Mammary epithelial cell (primary cell): ENCODE measurements at regions of chr19 and their contacts with region 1.

Region 1: GRCh38 chr19:6460101-6460853 is 685 bp upstream of the SLC25A23 start:
- DNase-seq: peak; percentile 99
- H3K4me3 ChIP-seq: peak overlapping the region; percentile 47 to 85 (median 58)
- H3K27ac ChIP-seq: peak overlapping the region; percentile 55
- H3K4me1 ChIP-seq: peaks cover 6% of the 10 kb centered on the region
- H3K27me3 ChIP-seq: no peaks in the 10 kb centered on the region
- CTCF ChIP-seq: peak; percentile 36 to 46

Region 2: DNA sequence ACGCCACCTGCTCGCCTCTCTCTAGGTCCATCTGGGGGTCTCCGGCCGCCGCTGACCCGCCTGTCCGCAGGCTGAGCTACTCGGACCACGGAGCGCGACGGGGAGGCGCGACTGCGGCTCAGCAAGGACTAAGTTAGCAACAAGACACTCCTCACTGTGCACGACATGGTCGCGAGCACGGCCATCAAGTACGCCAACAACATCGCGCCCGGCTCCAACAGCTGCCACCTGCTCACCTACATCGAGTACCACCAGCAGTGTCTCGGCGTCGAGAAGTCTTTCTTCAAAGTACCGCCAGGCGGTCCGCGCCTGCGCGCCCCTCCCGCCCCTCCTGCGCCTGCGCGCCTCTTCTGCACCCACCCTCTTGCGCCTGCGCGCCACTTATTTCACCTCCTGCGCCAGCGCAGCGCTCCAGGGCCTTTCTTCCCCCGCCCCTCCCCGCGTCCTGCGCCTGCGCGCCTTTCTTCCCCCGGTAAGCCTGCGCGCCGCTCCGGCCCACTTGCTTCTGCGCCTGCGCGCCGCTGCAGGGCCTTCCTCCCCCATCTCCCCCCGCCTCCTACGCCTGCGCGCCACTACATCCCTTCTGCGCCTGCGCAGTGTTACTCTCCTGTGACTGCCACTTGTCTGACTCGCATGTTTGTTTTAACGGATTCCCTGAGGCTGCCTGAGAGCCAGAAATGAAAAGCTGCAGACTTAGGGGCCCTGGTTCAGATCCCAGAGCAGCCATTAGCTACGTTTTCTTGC is 260.9 kb before region 1 on chr19:
- CTCF ChIA-PET with region 1: no interaction called
- dilution Hi-C with region 1: no loop called
- in situ Hi-C with region 1: no loop called
- intact Hi-C with region 1: loop called (anchors 1 kb)
- DNase-seq: peak; percentile 98
- H3K4me3 ChIP-seq: peak overlapping the region; percentile 79 to 100 (median 95)
- H3K27ac ChIP-seq: peak overlapping the region; percentile 2
- H3K4me1 ChIP-seq: peaks cover 5% of the 10 kb centered on the region
- H3K27me3 ChIP-seq: no peaks in the 10 kb centered on the region
- CTCF ChIP-seq: peak; percentile 16 to 36

Region 3: DNA sequence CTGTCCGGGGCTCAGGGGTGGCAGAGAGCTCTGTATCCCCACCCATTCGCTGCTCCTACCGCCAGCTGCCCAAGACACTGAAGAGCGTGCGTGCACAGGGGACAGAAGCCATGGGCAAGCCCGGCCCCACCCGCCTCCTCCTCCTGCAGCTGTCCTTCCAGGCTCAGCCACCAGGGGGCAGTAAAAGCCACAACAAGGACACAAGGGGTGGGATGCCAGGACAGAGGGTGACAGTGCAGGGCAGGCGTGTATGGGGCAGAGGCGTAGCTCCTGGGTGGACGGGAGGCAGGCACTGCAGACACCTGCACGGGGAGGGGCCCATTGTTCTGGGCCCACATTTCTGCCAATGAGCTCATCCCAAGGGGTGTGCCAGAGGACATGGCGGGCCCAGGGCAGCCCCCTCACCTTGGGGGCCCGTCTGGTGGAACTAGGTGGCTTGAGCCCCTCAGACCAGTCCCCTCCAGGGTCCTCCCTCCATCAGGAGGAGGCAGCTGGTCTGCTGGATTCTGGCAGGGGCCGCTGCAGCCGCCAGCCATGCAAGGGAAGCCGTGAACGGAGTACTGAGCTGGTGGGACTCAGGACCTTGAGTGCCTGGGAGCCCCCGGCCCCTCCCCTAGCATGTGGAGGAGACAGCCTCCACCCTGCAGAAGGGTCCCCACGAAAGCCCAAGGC is 241.7 kb before region 1 on chr19:
- CTCF ChIA-PET with region 1: no interaction called
- dilution Hi-C with region 1: no loop called
- in situ Hi-C with region 1: no loop called
- intact Hi-C with region 1: no loop called
- DNase-seq: peak; percentile 58
- H3K4me3 ChIP-seq: no peak overlapping the region
- H3K27ac ChIP-seq: no peak overlapping the region
- H3K4me1 ChIP-seq: peaks cover 21% of the 10 kb centered on the region
- H3K27me3 ChIP-seq: no peaks in the 10 kb centered on the region
- CTCF ChIP-seq: peak; percentile 92 to 96

Region 4: DNA sequence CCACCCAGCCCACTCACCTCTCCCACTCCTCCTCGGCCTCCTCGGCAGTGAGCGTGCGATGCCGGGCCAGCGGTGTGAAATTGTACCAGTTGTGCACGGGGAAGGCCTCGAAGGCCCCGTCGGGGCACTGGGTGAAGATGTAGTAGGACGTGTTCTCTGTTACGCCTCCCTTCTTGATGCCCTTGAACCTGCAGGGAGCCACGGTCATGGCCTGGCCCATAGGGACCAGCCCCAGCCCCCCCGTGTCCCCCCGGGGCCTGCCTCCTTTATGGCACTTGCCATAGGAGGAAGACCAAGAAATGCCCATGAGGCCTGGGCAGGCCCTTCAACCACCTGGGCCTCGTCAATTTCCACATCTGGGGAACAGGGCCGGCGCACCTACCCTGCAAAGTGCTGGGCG is 72.9 kb before region 1 on chr19:
- CTCF ChIA-PET with region 1: no interaction called
- dilution Hi-C with region 1: loop called (anchors 5 kb)
- in situ Hi-C with region 1: no loop called
- intact Hi-C with region 1: no loop called
- DNase-seq: no peak
- H3K4me3 ChIP-seq: no peak overlapping the region
- H3K27ac ChIP-seq: no peak overlapping the region
- H3K4me1 ChIP-seq: peaks cover 3% of the 10 kb centered on the region
- H3K27me3 ChIP-seq: no peaks in the 10 kb centered on the region
- CTCF ChIP-seq: no peak

Region 5: GRCh38 chr19:6424939-6425731 is 35.1 kb before region 1 on chr19:
- CTCF ChIA-PET with region 1: no interaction called
- dilution Hi-C with region 1: no loop called
- in situ Hi-C with region 1: no loop called
- intact Hi-C with region 1: loop called (anchors 1 kb)
- DNase-seq: peak; percentile 100
- H3K4me3 ChIP-seq: peak overlapping the region; percentile 6 to 21 (median 7)
- H3K27ac ChIP-seq: peak overlapping the region; percentile 26
- H3K4me1 ChIP-seq: peaks cover 19% of the 10 kb centered on the region
- H3K27me3 ChIP-seq: no peaks in the 10 kb centered on the region
- CTCF ChIP-seq: no peak

Region 6: DNA sequence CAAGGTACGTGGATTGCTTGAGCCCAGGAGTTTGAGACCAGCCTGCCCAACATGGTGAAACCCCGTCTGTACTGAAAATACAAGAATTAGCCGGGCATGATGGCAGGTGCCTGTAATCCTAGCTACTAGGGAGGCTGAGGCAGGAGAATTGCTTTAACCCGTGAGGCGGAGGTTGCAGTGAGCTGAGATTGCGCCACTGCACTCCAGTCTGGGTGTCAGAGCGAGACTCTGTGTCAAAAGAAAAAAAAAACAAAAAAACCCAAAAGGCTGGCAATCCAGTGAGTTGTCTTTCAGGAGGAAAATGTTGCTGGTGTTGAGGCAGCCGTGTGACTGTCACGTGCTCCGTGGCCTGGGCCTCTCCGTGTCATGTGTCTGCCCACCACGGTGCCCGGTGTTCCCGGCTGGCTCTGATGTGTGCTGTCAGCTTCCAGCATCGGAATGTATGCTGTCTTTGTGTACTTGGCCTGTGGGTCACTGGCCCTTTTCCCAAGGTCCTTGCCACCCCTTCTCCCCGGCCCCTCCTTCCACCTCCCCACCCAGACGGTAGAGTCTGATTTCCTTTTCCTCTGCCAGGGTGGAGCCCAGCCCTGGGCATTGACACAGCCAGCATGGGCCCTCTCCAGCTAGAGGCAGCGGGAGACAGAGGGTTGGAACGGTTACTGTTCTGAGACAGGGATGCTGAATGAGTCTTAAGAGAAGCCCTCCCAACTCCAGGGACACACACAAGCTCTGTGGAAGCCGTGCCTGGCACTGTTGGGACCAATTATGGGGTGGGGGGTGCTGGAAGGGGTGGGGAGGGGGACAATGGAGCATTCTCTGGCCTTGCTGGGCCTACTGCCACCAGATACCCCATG is 49.1 kb after region 1 on chr19:
- CTCF ChIA-PET with region 1: no interaction called
- dilution Hi-C with region 1: no loop called
- in situ Hi-C with region 1: no loop called
- intact Hi-C with region 1: no loop called
- DNase-seq: no peak
- H3K4me3 ChIP-seq: no peak overlapping the region
- H3K27ac ChIP-seq: no peak overlapping the region
- H3K4me1 ChIP-seq: no peaks in the 10 kb centered on the region
- H3K27me3 ChIP-seq: no peaks in the 10 kb centered on the region
- CTCF ChIP-seq: no peak

Region 7: DNA sequence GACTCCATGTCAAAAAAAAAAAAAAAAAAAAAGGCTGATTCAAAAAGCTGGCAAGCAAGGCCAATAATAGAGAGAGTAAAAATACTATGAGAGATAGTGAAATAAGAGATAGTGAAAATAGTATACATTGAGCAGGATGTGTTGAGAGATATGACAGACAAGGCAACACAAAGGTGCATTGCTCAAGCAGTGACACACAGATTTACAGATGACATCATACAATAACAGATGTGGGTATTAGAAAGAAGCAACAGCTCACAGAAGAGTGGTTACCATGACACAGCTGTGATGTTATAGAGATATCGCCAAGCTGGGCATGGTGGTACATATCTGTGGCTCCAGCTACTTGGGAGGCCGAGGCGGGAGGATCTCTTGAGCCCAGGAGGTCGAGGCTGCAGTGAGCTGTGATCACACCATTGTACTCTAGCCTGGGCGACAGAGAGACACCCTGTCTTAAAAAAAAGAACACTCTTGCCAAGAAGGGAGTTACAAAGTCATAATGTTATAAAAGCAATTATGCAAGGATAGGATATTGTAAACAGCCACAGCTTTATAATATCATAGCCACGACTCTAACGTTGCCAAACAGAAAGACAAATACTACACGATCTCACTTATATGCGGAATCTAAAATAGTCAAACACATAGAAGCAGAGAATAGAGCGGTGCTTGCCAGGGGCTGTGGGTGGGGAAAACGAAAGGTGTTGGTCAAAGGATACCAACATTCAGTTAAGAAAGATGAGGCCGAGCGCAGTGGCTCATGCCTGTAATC is 80.8 kb after region 1 on chr19:
- CTCF ChIA-PET with region 1: no interaction called
- dilution Hi-C with region 1: no loop called
- in situ Hi-C with region 1: no loop called
- intact Hi-C with region 1: no loop called
- DNase-seq: peak; percentile 57
- H3K4me3 ChIP-seq: no peak overlapping the region
- H3K27ac ChIP-seq: no peak overlapping the region
- H3K4me1 ChIP-seq: peaks cover 25% of the 10 kb centered on the region
- H3K27me3 ChIP-seq: no peaks in the 10 kb centered on the region
- CTCF ChIP-seq: no peak

Region 8: DNA sequence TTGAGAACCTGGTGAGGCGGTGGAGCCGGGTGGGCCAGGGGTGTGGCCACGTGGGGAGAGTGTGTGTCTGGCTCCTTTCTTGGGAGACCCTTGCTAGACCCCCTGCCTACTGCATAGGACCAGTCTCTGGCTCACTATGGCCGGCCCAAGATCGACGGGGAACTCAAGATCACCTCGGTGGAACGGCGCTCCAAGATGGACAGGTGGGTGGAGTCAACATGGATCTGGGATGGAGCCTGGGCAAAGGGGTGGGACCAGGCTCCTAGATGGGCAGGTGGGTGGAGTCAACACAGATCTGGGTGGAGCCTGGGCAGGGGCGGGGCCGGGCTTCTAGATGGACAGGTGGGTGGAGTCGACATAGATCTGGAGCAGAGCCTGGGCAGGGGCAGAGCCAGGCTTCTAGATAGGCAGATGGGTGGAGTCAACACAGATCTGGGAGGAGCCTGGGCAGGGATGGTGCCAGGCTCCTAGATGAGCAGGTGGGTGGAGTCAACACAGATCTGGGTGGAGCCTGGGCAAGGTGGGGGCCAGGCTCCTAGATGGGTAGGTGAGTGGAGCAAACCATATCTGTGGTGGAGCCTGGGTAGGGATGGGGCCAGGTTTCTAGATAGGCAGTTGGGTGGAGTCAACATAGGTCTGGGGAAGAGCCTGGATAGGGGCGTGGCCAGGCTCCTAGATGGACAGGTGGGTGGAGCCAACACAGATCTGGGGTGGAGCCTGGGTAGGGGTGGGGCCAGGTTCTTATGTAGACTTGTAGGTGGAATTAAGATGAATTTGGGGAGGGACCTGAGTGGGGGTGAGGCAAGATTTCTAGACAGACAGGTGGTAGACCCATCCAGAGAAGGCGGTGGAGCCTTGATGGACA is 368.7 kb after region 1 on chr19:
- CTCF ChIA-PET with region 1: no interaction called
- dilution Hi-C with region 1: loop called (anchors 10 kb)
- in situ Hi-C with region 1: no loop called
- intact Hi-C with region 1: no loop called
- DNase-seq: no peak
- H3K4me3 ChIP-seq: no peak overlapping the region
- H3K27ac ChIP-seq: no peak overlapping the region
- H3K4me1 ChIP-seq: no peaks in the 10 kb centered on the region
- H3K27me3 ChIP-seq: no peaks in the 10 kb centered on the region
- CTCF ChIP-seq: no peak